ENCODE measurements at regions of chr11 and their contacts with region 1.

Region 1: DNA sequence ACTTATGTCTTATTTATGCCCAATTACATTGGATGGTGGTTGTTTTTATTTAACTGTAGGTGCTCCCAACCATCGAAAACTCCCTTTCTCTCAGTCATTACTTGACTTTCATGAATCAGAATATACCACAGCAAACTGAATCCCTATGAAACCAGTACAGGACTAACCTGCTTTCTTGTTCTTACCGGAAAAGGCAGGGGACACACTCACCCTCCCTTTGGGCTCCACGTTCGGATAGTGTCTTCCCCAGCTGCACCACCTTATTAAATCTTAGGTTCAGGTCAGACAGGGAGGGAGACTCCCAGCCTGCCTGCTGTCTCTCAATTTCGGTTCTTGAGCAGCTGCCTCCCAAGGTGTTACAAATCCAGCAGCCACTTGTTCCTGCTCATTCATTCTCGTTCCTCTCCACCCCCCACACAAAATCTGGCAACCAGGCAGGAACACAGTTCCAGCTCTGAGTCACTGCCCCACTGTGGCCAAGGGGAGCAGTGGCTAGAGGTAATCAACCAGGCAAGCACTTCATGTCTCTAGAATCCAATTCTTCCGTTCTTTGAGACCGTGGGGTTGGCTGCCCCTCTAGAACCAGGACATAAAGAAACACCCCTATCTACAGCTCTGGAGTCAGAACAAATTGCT is 133.0 kb downstream of the PLEKHA7 start:
- DNase-seq: peak; percentile 58 to 70
- ATAC-seq: peak; percentile 84 to 94 (median 88)
- H3K4me3 ChIP-seq: peak overlapping the region in 7 of 10 donors; percentile 6 to 38 (median 18)
- H3K27ac ChIP-seq: peak overlapping the region in 9 of 10 donors; percentile 14 to 79 (median 60)
- H3K4me1 ChIP-seq: peaks cover 0 to 75% (median 41%) of the 10 kb centered on the region in 9 donors
- H3K27me3 ChIP-seq: no peaks in the 10 kb centered on the region
- CTCF ChIP-seq: peak in 8 of 9 donors; percentile 28 to 69 (median 48)

Region 2: GRCh38 chr11:16820324-16821092 is 60.7 kb before region 1 on chr11:
- intact Hi-C with region 1: loop called in 9 of 10 experiments (anchors 1 to 10 kb)
- DNase-seq: peak; percentile 81 to 84
- ATAC-seq: peak; percentile 53 to 84 (median 78)
- H3K4me3 ChIP-seq: no peak overlapping the region
- H3K27ac ChIP-seq: peak overlapping the region in 8 of 10 donors; percentile 9 to 75 (median 51)
- H3K4me1 ChIP-seq: peaks cover 0 to 65% (median 50%) of the 10 kb centered on the region in 9 donors
- H3K27me3 ChIP-seq: no peaks in the 10 kb centered on the region
- CTCF ChIP-seq: peak; percentile 71 to 92 (median 86)

Region 3: DNA sequence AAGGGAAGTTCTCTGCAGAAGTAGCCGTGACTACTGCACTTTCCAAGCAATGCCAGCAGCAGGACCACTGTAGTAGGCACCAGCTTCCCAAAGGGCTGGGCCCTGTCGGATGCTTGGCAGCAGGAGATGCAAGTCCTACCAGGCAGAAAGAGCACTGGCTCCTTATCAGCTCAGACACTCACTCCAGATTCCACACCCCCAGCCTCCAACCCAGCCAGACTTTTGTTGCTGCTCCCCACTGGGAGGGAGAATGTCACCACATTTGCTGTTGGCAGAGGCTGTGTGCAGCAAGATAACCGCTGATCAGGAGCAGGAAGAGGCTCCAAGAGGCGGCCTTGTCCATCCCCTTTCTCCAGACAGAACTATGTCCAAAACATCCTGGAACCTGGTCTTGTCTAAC is 24.0 kb before region 1 on chr11:
- intact Hi-C with region 1: loop called in 2 of 10 experiments (anchors 2 kb)
- DNase-seq: peak; percentile 55 to 72
- ATAC-seq: peak; percentile 57 to 90 (median 80)
- H3K4me3 ChIP-seq: peak overlapping the region in 1 of 10 donors; percentile 35
- H3K27ac ChIP-seq: peak overlapping the region in 8 of 10 donors; percentile 25 to 93 (median 80)
- H3K4me1 ChIP-seq: peaks cover 6 to 86% (median 52%) of the 10 kb centered on the region in 9 donors
- H3K27me3 ChIP-seq: no peaks in the 10 kb centered on the region
- CTCF ChIP-seq: peak in 1 of 9 donors; percentile 4

Region 4: DNA sequence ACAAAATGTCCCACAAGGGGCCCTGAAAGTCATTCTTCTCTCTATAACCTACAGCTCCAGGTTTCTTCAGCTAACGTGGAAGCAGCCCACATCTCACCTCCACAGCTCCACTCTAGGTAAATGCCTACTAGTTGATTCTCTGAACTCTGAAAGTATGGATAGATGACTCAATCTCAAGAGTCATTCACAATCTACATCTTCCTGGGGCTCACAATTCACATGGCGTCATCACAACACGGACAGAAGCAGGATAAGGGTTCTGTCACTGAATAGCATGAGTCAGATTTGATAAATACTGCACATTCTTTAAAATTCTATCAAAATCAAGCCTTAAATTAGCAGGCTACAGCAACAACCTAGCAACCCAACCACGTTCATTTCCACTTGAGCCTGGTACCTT is 36.7 kb after region 1 on chr11:
- intact Hi-C with region 1: no loop called
- DNase-seq: no peak
- ATAC-seq: no peak
- H3K4me3 ChIP-seq: no peak overlapping the region
- H3K27ac ChIP-seq: no peak overlapping the region
- H3K4me1 ChIP-seq: peaks cover 0 to 14% (median 3%) of the 10 kb centered on the region in 9 donors
- H3K27me3 ChIP-seq: no peaks in the 10 kb centered on the region
- CTCF ChIP-seq: no peak

Region 5: GRCh38 chr11:17519061-17519885 is 638.1 kb after region 1 on chr11:
- intact Hi-C with region 1: no loop called
- DNase-seq: no peak
- ATAC-seq: no peak
- H3K4me3 ChIP-seq: no peak overlapping the region
- H3K27ac ChIP-seq: no peak overlapping the region
- H3K4me1 ChIP-seq: no peaks in the 10 kb centered on the region
- H3K27me3 ChIP-seq: peaks cover 0 to 7% (median 0%) of the 10 kb centered on the region in 7 donors
- CTCF ChIP-seq: no peak